Lower lobe of right lung (tissue), 2 donors: ENCODE measurements at regions of chr14 and their contacts with region 1.

Region 1: GRCh38 chr14:95527387-95528002 is 7.4 kb upstream of the GLRX5 start:
- DNase-seq: no peak
- ATAC-seq: peak; percentile 47 to 60
- H3K4me3 ChIP-seq: peak overlapping the region; percentile 14
- H3K27ac ChIP-seq: peak overlapping the region; percentile 63
- H3K4me1 ChIP-seq: peaks cover 68% of the 10 kb centered on the region
- H3K27me3 ChIP-seq: no peaks in the 10 kb centered on the region
- CTCF ChIP-seq: peak; percentile 83

Region 2: GRCh38 chr14:95442633-95443021 is 84.9 kb before region 1 on chr14:
- intact Hi-C with region 1: loop called (anchors 5 kb)
- DNase-seq: peak; percentile 86
- ATAC-seq: peak; percentile 93 to 95
- H3K4me3 ChIP-seq: no peak overlapping the region
- H3K27ac ChIP-seq: no peak overlapping the region
- H3K4me1 ChIP-seq: peaks cover 7% of the 10 kb centered on the region
- H3K27me3 ChIP-seq: no peaks in the 10 kb centered on the region
- CTCF ChIP-seq: peak; percentile 90

Region 3: GRCh38 chr14:95662376-95663186 is 135.1 kb after region 1 on chr14:
- intact Hi-C with region 1: no loop called
- DNase-seq: no peak
- ATAC-seq: no peak
- H3K4me3 ChIP-seq: no peak overlapping the region
- H3K27ac ChIP-seq: no peak overlapping the region
- H3K4me1 ChIP-seq: no peaks in the 10 kb centered on the region
- H3K27me3 ChIP-seq: peaks cover 27% of the 10 kb centered on the region
- CTCF ChIP-seq: no peak